Right ventricle myocardium superior (tissue), 1 donor: ENCODE measurements at regions of chr6 and their contacts with region 1.

Region 1: DNA sequence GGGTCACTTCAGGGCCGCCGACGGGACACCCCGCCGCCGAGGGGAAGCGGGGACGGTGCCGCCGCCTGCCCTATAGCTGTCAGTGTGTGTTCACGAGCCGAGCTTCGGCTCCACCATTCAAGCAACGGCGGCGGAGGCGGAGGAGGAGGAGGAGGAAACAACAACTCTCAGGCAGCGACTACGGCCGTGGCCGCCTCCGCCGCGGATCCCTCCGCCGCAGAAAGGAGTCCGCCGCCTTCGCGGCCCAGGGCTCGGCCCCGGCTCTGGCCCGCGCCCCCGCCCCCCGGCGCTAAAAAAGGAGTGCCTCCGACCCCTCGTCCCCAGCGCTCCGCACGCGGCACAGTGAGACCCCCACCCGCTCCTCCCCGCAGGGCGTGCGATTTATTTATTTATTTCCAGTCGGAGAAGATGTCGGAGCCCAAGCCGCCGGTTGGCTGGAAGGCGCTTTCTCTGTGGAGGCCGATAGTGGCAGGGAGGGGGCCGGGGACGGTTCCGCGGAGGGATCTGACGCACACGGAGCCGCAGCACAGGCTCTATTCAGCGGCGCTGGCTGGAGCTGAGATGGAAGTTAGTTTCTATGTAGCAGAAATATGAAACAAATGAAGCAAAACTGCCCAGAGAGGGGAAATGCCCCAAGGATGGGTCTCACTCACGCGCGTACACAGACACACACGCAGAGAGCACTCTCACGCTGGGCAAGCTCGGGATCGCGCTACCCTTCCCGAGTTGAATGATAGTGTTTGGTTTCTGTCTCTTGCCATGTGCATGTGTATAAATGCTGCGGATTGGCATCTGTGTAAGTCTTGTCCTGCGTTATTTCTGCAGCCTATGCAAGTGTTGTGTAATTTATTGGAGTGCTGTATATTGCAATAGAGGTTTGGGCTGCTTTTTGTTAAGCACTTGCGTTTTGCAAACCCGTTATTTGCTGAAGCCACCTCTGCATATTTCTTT is at the start of gene PHIP:
- DNase-seq: peak; percentile 96
- ATAC-seq: peak; percentile 95
- total RNA-seq, gene PHIP: 13.3 TPM

Region 2: DNA sequence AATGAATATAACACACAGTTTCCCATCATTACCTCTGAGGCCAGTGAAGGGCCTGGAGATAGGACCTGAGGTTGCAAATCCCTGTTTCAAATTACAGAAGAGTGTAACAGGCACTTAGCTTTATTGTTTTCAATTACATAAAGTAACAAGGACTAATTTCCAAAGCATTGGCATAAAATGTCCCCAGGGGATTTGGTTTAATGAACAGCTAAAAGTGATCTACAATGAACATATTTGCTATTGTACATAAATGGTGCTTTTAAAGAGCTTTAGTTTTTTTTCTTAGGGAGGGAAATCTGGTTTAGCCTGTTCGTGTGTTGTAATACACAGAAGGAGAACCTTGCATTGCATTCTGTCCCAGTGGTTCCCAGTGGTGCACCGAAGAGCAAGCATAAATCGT is 101.7 kb after region 1 on chr6:
- intact Hi-C with region 1: no loop called
- DNase-seq: no peak
- ATAC-seq: no peak

Region 3: GRCh38 chr6:79233611-79234149 is 155.3 kb after region 1 on chr6:
- intact Hi-C with region 1: loop called (anchors 5 kb)
- DNase-seq: peak; percentile 94
- ATAC-seq: peak; percentile 96

Region 4: DNA sequence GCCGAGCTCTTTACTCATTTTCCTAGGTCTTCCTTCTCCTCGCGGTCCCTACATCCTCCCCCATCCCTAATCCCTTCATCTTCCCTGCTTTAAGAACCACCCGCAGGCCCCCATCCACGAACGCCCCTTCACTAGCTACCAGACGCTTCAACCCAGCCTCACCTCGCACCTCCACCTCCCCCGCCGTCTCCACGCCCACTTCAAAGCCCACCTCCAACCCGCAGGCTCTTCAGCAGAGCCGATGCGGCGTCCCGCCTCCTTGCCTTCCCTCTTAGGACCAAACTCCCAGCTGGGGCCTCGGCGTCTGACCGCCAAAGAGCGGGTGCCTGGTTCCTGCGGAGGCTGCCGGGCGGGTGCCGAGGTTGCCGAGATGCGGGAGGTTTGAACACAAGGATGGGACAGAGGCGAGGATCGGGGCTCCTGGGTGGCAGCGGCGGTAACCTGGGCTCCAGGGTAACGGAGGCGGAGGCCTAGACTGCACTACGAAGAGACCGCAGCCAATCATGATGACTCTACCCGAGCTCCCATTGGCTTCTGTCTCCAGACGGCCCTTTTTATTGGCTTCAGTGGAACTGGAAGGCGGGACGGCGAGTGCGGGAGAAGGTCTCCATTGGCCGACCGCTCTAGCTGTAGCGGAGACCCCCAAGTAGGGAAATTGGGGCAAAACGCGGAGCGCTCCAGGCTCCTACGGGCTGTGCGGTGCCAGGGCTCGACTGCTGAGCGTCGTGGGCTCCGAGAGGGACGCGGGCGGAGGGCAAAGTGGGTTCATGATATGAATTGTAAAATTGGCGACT is 458.8 kb after region 1 on chr6 and contains the start of gene LCA5:
- intact Hi-C with region 1: loop called (anchors 10 kb)
- DNase-seq: peak; percentile 93
- ATAC-seq: peak; percentile 98
- total RNA-seq, gene LCA5: 1.9 TPM